Ovary (tissue), 10 donors: ENCODE measurements at regions of chr2 and their contacts with region 1.

Region 1: DNA sequence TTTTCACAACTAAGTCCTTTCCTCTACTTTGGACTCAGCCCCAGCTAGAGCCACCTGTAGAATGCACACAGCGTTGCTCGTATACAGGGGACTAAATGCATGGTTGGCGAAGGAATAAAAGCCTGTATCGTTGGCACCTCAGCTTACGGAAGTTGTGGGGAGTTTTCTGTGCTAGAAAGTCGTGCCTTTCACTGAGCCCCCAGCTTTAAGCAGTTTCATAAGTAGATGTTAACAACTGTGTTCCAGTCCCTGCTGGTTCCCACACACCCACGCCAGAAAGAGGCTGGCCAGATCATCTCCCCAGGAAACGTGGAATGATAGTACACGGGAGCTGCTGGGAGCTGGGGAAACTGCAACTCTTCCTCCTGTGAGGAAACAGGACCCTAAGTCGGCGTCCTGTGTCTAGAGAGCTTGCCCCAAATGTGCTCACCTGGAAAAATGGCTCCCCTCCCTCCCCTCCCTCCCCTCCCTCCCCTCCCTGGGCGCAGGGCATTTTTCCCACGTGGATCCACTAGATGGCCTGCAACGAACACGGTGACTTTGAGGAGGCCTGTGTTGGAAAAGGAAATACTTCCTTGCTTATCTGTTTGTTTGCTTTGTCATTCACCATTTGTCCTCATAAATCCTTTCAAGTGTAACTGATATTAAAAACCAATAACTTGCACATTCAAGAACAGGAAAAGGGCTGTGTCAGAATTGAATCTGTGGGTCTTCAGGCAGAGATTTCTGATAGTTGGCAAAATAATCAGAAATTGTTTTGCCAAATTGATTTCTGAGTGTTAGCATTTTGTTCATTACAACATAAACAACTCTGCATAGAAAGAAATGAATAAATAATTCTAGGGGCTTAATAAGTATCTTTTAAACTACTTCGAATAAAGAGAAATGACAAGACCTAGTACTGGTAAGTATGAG is 43.9 kb upstream of the RFX8 start:
- DNase-seq: peak; percentile 35 to 52 (median 47)
- H3K4me3 ChIP-seq: no peak overlapping the region
- H3K27ac ChIP-seq: peak overlapping the region; percentile 26 to 55
- H3K4me1 ChIP-seq: peaks cover 3% of the 10 kb centered on the region
- H3K27me3 ChIP-seq: no peaks in the 10 kb centered on the region
- CTCF ChIP-seq: peak in 1 of 3 donors; percentile 7
- EP300 ChIP-seq: no peak
- POLR2A ChIP-seq: no peak

Region 2: DNA sequence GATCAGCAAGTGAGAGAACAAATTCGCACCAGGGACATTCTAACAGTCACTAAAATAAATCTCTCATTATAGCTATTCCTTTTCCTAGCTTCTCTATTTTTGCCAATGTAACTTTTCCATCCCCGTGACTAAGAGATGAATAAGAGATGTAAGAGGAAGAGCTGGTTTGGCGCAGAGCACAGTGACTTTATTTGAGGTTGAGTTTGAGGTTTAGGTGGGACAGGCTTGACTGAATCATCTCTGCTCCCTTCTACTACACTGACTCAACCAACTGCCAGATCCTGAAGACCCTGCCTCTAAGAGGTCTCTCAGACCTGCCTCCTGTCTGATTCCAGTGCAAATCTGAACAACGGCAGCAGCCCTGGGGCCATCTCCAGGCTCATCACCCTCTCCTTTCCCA is 72.0 kb before region 1 on chr2:
- intact Hi-C with region 1: loop called in 1 of 4 experiments (anchors 10 kb)
- DNase-seq: no peak
- H3K4me3 ChIP-seq: no peak overlapping the region
- H3K27ac ChIP-seq: no peak overlapping the region
- H3K4me1 ChIP-seq: no peaks in the 10 kb centered on the region
- H3K27me3 ChIP-seq: no peaks in the 10 kb centered on the region
- CTCF ChIP-seq: no peak
- EP300 ChIP-seq: no peak
- POLR2A ChIP-seq: no peak

Region 3: DNA sequence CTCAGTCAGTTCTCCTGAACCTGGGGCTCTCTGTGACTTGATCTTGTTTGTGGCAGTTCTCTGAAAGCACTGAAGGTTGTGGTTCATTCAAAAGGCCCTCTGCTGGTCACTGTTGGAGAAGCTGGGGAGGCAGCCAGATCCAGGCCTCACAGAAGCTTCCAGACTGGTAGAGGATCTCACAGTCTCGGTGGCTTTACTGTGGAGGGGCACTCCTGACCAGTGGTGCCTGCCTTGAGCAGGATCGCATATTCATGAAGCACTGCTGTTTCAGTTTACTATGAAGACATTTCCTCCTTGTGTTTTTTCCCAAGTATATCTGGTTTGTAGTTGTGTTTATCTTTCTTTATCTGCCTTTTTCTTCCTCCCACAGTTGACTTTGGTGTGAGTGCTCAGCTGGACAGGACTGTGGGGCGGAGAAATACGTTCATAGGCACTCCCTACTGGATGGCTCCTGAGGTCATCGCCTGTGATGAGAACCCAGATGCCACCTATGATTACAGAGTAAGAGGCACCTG is 312.6 kb after region 1 on chr2:
- intact Hi-C with region 1: loop called in 2 of 4 experiments (anchors 5 to 10 kb)
- DNase-seq: peak; percentile 63 to 81 (median 69)
- H3K4me3 ChIP-seq: no peak overlapping the region
- H3K27ac ChIP-seq: peak overlapping the region in 1 of 2 donors; percentile 34
- H3K4me1 ChIP-seq: peaks cover 14% of the 10 kb centered on the region
- H3K27me3 ChIP-seq: no peaks in the 10 kb centered on the region
- CTCF ChIP-seq: peak; percentile 43 to 76 (median 61)
- EP300 ChIP-seq: no peak
- POLR2A ChIP-seq: no peak

Region 4: DNA sequence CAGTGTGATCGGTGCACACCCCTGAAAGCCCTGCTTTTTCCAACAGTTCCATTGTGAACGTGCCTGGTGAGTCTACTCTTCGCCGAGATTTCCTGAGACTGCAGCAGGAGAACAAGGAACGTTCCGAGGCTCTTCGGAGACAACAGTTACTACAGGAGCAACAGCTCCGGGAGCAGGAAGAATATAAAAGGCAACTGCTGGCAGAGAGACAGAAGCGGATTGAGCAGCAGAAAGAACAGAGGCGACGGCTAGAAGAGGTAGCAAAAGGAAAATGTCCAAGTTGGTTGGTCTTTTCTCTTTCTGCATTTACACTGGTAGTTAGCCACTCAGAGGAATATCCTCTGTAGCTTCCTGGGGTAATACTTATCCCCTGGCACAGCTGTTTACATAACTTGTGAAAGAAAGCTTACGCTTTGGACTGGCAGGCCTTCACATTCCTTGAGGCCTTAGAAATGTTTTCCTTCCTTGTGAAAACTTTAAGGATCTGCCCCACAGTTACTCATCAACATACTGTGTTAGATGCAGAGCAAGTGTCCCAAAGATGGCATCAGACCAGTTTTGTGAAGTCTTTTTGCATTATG is 325.3 kb after region 1 on chr2:
- intact Hi-C with region 1: loop called in 2 of 4 experiments (anchors 10 kb)
- DNase-seq: no peak
- H3K4me3 ChIP-seq: no peak overlapping the region
- H3K27ac ChIP-seq: no peak overlapping the region
- H3K4me1 ChIP-seq: no peaks in the 10 kb centered on the region
- H3K27me3 ChIP-seq: no peaks in the 10 kb centered on the region
- CTCF ChIP-seq: no peak
- EP300 ChIP-seq: no peak
- POLR2A ChIP-seq: no peak